ENCODE measurements at regions of chr6 and their contacts with region 1.

Region 1: GRCh38 chr6:22622351-22622750 is 53.0 kb downstream of the HDGFL1 start:
- DNase-seq: no peak

Region 2: GRCh38 chr6:22657352-22657980 is 35.1 kb after region 1 on chr6:
- intact Hi-C with region 1: loop called (anchors 5 kb)
- DNase-seq: no peak

Measured in cardiac septum (tissue), 1 donor.